ENCODE measurements at regions of chr14 and their contacts with region 1.

Region 1: DNA sequence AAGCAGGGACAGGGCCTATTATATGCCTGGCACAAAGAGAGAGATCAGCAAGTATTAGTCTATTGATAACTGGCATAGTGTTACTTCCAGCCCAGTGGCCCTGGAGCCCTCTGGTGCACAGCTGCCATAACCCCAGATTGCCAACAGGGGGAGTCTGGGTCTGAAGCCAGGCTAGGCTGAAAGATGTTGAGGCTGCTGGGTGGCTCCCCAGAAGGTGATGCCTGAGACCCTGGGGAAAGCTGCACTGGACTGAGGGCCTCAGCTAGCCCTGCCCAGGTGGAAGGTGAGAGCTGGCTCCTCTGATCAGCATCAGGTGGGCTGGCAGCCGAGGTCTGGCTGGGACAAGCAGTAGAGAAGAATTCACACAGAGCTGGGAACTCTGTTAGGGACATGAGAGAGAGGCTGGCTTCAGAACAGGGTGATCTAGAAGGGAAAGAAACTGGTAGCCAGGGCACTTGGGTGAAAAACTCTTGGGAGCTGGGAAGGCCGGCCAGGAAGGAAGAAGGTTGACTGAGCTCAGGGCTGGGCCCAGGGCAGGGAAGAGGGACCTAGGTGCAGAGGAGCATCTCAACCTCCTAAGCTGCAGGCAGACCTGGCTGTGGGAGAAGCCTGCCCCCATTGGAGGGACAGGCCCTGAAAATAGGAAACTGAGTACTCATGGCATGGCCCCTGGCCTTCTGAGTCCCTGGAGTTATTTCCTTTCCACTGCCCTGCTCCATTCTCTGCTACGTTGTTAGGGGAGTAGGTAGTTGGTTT is 3.9 kb downstream of the GZMH start:
- DNase-seq: peak; percentile 81
- H3K4me3 Mint-ChIP-seq: peak overlapping the region; percentile 65
- H3K27ac Mint-ChIP-seq: peak overlapping the region; percentile 80
- H3K4me1 Mint-ChIP-seq: peaks cover 50% of the 10 kb centered on the region
- H3K27me3 Mint-ChIP-seq: peaks cover 6% of the 10 kb centered on the region

Region 2: GRCh38 chr14:24565766-24566165 is 39.8 kb before region 1 on chr14:
- CTCF ChIA-PET with region 1: no interaction called
- POLR2A ChIA-PET with region 1: no interaction called
- DNase-seq: no peak
- H3K4me3 Mint-ChIP-seq: no peak overlapping the region
- H3K27ac Mint-ChIP-seq: no peak overlapping the region
- H3K4me1 Mint-ChIP-seq: no peaks in the 10 kb centered on the region
- H3K27me3 Mint-ChIP-seq: peaks cover 18% of the 10 kb centered on the region

Region 3: DNA sequence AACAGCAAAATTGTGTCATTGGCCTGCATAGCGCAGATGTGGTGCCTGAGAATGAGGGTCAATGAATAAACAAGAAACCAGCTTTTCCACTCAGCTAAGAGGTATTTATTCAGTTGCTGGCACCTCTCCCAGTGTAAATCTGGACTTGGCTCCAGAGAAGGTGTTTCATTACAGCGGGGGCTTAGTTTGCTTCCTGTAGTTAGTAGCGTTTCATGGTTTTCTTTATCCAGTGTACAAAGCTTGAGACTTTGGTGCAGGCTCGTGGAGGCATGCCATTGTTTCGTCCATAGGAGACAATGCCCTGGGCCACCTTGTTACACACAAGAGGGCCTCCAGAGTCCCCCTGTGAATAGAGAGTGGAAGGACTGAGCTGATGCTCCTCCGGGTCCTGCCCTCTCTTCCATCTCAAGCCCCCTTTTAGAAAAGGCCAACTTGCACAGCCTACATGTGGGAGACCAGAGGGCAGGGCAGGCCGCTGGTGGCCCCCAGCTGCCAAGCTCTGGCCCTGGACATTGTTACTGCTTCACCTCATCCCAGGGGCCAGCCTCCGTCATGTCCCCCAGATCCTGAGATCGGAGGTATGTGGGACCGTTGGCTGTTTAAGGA is 25.4 kb after region 1 on chr14:
- CTCF ChIA-PET with region 1: interaction called, 15 read pairs
- POLR2A ChIA-PET with region 1: interaction called, 10 read pairs
- DNase-seq: no peak
- H3K4me3 Mint-ChIP-seq: peak overlapping the region; percentile 84
- H3K27ac Mint-ChIP-seq: peak overlapping the region; percentile 90
- H3K4me1 Mint-ChIP-seq: peaks cover 51% of the 10 kb centered on the region
- H3K27me3 Mint-ChIP-seq: no peaks in the 10 kb centered on the region

Region 4: GRCh38 chr14:24673534-24674203 is 68.1 kb after region 1 on chr14:
- CTCF ChIA-PET with region 1: interaction called, 57 read pairs
- POLR2A ChIA-PET with region 1: interaction called, 15 read pairs
- DNase-seq: peak; percentile 83
- H3K4me3 Mint-ChIP-seq: peak overlapping the region; percentile 76
- H3K27ac Mint-ChIP-seq: peak overlapping the region; percentile 97
- H3K4me1 Mint-ChIP-seq: peaks cover 88% of the 10 kb centered on the region
- H3K27me3 Mint-ChIP-seq: no peaks in the 10 kb centered on the region

Region 5: DNA sequence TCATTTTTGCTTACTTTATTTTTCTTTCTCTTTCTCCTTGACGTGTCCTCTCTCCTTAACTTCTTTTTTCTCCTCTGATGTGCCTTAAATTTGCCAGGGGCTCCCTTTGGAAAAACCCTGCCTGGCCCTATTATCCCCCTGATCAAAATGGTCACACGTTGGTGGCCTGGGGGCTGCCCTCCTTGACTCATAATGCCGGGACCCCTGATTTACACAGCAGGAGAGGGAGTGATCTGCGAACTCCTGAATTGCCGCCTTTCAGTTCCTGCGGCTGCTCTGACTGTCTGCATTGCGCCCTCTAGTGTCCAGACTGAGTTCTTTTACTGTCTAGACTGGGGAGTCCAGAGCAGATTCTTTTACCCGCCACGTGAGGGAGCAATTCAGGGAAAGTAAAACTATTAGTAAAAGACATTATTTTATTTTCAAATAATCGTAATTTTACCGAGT is 73.2 kb after region 1 on chr14:
- CTCF ChIA-PET with region 1: interaction called, 57 read pairs
- POLR2A ChIA-PET with region 1: interaction called, 15 read pairs
- DNase-seq: peak; percentile 82
- H3K4me3 Mint-ChIP-seq: peak overlapping the region; percentile 69
- H3K27ac Mint-ChIP-seq: peak overlapping the region; percentile 70
- H3K4me1 Mint-ChIP-seq: peaks cover 68% of the 10 kb centered on the region
- H3K27me3 Mint-ChIP-seq: peaks cover 6% of the 10 kb centered on the region

Region 6: DNA sequence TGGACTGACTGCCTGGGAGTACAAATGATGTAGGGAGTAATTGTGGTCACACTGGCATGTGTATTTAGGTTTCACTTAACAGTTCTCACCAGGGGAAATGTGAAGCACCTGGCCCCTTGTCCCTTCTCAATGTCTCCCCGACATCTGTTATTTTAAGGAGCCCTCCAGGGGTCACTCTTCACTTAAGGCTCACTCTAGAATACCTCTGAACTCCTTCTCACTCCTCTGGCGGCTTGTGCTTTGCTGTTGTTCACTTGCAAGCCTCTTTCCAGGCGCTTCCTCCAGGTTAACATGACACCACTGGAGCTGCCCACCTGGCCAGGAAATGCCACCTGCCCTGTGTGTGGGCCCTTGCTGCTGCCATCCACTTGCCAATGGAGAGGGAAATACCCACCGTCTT is 84.9 kb after region 1 on chr14:
- CTCF ChIA-PET with region 1: interaction called, 14 read pairs
- POLR2A ChIA-PET with region 1: interaction called, 4 read pairs
- DNase-seq: no peak
- H3K4me3 Mint-ChIP-seq: no peak overlapping the region
- H3K27ac Mint-ChIP-seq: no peak overlapping the region
- H3K4me1 Mint-ChIP-seq: peaks cover 31% of the 10 kb centered on the region
- H3K27me3 Mint-ChIP-seq: peaks cover 1% of the 10 kb centered on the region

Region 7: DNA sequence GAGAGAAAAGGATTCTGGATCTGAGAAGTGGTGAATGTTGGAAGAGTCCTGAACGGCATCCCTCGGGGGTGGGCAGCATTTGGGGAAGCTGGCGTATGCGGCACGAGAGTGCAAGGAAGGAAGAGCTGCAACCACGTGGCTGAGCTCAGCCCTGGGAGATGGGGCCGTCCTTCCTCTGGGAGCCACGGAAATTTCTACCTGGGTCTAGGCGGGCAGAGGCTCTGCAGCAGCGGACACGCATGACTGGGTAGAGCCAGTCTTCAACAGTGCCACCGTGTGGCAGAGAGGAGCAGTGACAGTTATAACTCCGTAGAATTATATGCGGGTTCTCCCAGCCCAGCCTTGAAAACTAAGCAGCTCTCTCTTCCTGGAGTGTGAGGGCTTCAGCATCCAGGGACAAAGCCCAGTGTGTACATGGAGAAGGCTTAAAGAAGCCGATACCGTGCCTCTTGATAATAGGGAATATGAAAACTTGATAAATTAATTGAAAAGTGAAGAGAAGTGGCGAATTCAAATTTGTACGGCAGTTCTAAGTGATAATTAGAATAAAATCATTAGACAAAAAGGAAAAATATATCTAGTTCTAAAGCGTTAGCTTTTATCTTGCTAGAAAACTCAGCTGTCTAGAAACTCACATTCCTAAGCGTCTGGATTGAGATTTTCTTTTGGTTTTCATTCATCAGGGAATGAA is 527.3 kb after region 1 on chr14:
- CTCF ChIA-PET with region 1: interaction called, 10 read pairs
- POLR2A ChIA-PET with region 1: no interaction called
- DNase-seq: peak; percentile 52
- H3K4me3 Mint-ChIP-seq: no peak overlapping the region
- H3K27ac Mint-ChIP-seq: no peak overlapping the region
- H3K4me1 Mint-ChIP-seq: no peaks in the 10 kb centered on the region
- H3K27me3 Mint-ChIP-seq: peaks cover 16% of the 10 kb centered on the region